ENCODE measurements at regions of chr1 and their contacts with region 1.

Region 1: DNA sequence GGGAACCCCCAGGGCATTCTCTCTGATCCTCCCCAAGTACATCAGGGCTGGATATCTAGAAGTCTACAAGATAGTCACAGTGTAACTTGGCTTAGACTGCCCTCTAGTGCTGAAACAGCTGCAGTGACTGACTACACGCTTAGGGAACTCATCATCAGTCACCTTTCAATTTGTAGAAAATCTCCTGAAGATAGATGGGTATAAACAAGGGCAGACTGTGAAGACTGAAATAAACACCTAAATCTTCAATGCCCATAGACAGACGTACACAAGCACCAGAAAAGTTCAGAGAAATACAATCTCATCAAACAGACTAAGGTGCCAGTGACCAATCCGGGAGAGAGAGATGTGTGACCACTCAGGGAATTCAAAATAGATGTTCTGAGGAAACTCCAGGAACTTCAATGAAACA is 46.6 kb downstream of the PACC1 start:
- DNase-seq: peak; percentile 93
- H3K4me3 Mint-ChIP-seq: no peak overlapping the region
- H3K27ac Mint-ChIP-seq: peak overlapping the region; percentile 5
- H3K4me1 Mint-ChIP-seq: peaks cover 15% of the 10 kb centered on the region
- H3K27me3 Mint-ChIP-seq: no peaks in the 10 kb centered on the region
- CTCF ChIP-seq: peak; percentile 99

Region 2: GRCh38 chr1:212012034-212012740 is 355.9 kb before region 1 on chr1:
- CTCF ChIA-PET with region 1: interaction called, 9 read pairs
- POLR2A ChIA-PET with region 1: no interaction called
- intact Hi-C with region 1: loop called (anchors 1 kb)
- DNase-seq: peak; percentile 95
- H3K4me3 Mint-ChIP-seq: no peak overlapping the region
- H3K27ac Mint-ChIP-seq: no peak overlapping the region
- H3K4me1 Mint-ChIP-seq: no peaks in the 10 kb centered on the region
- H3K27me3 Mint-ChIP-seq: no peaks in the 10 kb centered on the region
- CTCF ChIP-seq: peak; percentile 100

Region 3: GRCh38 chr1:212082765-212083406 is 285.2 kb before region 1 on chr1:
- CTCF ChIA-PET with region 1: interaction called, 12 read pairs
- POLR2A ChIA-PET with region 1: no interaction called
- intact Hi-C with region 1: no loop called
- DNase-seq: no peak
- H3K4me3 Mint-ChIP-seq: no peak overlapping the region
- H3K27ac Mint-ChIP-seq: no peak overlapping the region
- H3K4me1 Mint-ChIP-seq: no peaks in the 10 kb centered on the region
- H3K27me3 Mint-ChIP-seq: no peaks in the 10 kb centered on the region
- CTCF ChIP-seq: no peak

Region 4: DNA sequence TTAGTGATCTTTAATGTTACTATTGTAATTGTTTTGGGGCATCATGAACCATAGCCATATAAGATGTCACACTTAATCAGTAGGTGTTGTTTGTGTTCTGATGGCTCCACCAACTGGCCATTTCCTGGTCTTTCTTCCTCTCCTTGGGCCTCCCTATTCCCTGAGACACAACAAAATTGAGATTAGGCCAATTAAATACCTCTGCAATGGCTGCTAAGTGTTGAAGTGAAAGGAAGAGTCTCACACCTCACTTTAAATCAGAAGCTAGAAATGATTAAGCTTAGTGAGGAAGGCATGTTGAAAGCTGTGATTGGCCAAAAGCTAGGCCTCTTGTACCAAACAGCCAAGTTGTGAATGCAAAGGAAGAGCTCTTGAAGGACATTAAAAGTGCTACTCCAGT is 52.2 kb before region 1 on chr1:
- CTCF ChIA-PET with region 1: interaction called, 38 read pairs
- POLR2A ChIA-PET with region 1: no interaction called
- intact Hi-C with region 1: loop called (anchors 2 kb)
- DNase-seq: peak; percentile 72
- H3K4me3 Mint-ChIP-seq: no peak overlapping the region
- H3K27ac Mint-ChIP-seq: peak overlapping the region; percentile 60
- H3K4me1 Mint-ChIP-seq: peaks cover 14% of the 10 kb centered on the region
- H3K27me3 Mint-ChIP-seq: no peaks in the 10 kb centered on the region
- CTCF ChIP-seq: peak; percentile 48

Region 5: GRCh38 chr1:212346601-212347000 is 21.5 kb before region 1 on chr1:
- CTCF ChIA-PET with region 1: interaction called, 58 read pairs
- POLR2A ChIA-PET with region 1: interaction called, 3 read pairs
- intact Hi-C with region 1: no loop called
- DNase-seq: no peak
- H3K4me3 Mint-ChIP-seq: no peak overlapping the region
- H3K27ac Mint-ChIP-seq: no peak overlapping the region
- H3K4me1 Mint-ChIP-seq: no peaks in the 10 kb centered on the region
- H3K27me3 Mint-ChIP-seq: no peaks in the 10 kb centered on the region
- CTCF ChIP-seq: no peak

Region 6: GRCh38 chr1:212381397-212382035 is 13.4 kb after region 1 on chr1:
- CTCF ChIA-PET with region 1: interaction called, 76 read pairs
- POLR2A ChIA-PET with region 1: interaction called, 6 read pairs
- intact Hi-C with region 1: no loop called
- DNase-seq: no peak
- H3K4me3 Mint-ChIP-seq: no peak overlapping the region
- H3K27ac Mint-ChIP-seq: no peak overlapping the region
- H3K4me1 Mint-ChIP-seq: no peaks in the 10 kb centered on the region
- H3K27me3 Mint-ChIP-seq: no peaks in the 10 kb centered on the region
- CTCF ChIP-seq: no peak

Region 7: GRCh38 chr1:212586206-212587015 is 218.3 kb after region 1 on chr1:
- CTCF ChIA-PET with region 1: no interaction called
- POLR2A ChIA-PET with region 1: no interaction called
- intact Hi-C with region 1: no loop called
- DNase-seq: no peak
- H3K4me3 Mint-ChIP-seq: no peak overlapping the region
- H3K27ac Mint-ChIP-seq: no peak overlapping the region
- H3K4me1 Mint-ChIP-seq: peaks cover 6% of the 10 kb centered on the region
- H3K27me3 Mint-ChIP-seq: peaks cover 38% of the 10 kb centered on the region
- CTCF ChIP-seq: no peak